ENCODE measurements at regions of chr9 and their contacts with region 1.

Region 1: GRCh38 chr9:15606643-15607472 is 54.0 kb downstream of the CCDC171 start:
- DNase-seq: peak in 1 of 2 donors; percentile 5
- ATAC-seq: peak in 2 of 8 donors; percentile 52 to 56
- H3K4me3 ChIP-seq: no peak overlapping the region
- H3K27ac ChIP-seq: no peak overlapping the region
- H3K4me1 ChIP-seq: no peaks in the 10 kb centered on the region
- H3K27me3 ChIP-seq: no peaks in the 10 kb centered on the region
- CTCF ChIP-seq: peak; percentile 66 to 87 (median 77)

Region 2: DNA sequence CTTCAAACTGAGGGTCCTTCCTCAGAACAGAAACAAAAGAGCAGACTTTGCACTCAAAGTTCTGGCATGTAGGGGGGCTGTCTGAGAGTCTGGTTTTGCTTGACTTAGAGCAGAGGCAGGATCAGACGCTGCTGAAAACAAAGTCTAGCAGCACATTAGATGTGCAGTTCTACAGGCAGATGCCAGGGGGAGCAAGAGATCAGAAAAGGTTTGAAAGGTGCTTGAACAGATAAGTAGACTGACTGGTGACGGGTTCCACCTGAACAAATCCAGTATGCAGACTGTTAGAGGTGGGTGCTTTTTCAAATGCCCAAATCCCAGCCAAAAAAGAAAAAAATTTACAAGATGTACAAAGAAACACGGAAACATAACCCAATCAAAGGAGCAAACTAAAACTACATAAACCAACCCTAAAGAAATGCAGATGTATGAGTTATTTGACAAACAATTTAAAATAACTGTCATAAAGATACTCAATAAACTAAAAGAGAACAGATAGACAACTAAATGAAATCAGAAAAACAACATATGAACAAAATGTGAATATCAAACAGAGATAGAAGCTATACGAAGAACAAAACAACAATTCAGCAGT is 501.9 kb before region 1 on chr9:
- intact Hi-C with region 1: loop called in 3 of 10 experiments (anchors 10 kb)
- DNase-seq: peak in 1 of 2 donors; percentile 20
- ATAC-seq: peak in 3 of 8 donors; percentile 31 to 52 (median 38)
- H3K4me3 ChIP-seq: no peak overlapping the region
- H3K27ac ChIP-seq: no peak overlapping the region
- H3K4me1 ChIP-seq: no peaks in the 10 kb centered on the region
- H3K27me3 ChIP-seq: peaks cover 0 to 4% (median 0%) of the 10 kb centered on the region in 7 donors
- CTCF ChIP-seq: peak; percentile 27 to 77 (median 69)

Region 3: DNA sequence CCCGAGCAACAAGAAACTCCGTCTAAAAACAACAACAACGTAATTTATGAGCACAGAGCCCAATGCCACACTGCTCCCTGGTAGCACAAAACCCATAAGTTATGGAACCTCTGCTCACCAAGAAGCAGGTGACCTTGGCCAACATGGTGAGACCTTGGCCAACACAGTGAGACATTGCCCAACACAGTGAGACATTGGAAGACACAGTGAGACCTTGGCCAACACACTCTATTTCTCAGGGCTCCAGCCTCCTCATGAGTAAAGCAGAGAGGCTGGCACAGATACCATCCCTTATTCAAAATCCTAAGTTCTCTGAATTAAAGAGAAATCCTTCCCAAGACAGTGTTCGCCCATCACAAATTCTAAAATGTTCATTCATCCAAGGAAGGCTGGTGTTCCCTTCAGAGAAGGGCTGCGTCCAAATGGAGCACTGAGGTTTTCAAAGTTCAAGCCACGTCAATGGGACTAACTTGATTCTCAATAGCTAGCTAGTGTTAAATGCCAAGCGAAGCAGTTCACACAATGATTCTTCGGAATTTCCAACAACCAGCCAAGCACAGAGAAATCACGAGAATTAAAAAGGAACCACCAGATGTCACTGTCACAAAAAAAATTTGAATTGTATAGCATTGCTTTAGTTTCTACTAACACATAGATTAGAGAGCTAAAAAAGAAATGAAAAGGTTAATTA is 329.3 kb before region 1 on chr9:
- intact Hi-C with region 1: loop called in 6 of 10 experiments (anchors 5 to 10 kb)
- DNase-seq: no peak
- ATAC-seq: peak in 3 of 8 donors; percentile 49 to 57 (median 51)
- H3K4me3 ChIP-seq: no peak overlapping the region
- H3K27ac ChIP-seq: no peak overlapping the region
- H3K4me1 ChIP-seq: no peaks in the 10 kb centered on the region
- H3K27me3 ChIP-seq: no peaks in the 10 kb centered on the region
- CTCF ChIP-seq: peak in 7 of 9 donors; percentile 30 to 56 (median 51)

Region 4: DNA sequence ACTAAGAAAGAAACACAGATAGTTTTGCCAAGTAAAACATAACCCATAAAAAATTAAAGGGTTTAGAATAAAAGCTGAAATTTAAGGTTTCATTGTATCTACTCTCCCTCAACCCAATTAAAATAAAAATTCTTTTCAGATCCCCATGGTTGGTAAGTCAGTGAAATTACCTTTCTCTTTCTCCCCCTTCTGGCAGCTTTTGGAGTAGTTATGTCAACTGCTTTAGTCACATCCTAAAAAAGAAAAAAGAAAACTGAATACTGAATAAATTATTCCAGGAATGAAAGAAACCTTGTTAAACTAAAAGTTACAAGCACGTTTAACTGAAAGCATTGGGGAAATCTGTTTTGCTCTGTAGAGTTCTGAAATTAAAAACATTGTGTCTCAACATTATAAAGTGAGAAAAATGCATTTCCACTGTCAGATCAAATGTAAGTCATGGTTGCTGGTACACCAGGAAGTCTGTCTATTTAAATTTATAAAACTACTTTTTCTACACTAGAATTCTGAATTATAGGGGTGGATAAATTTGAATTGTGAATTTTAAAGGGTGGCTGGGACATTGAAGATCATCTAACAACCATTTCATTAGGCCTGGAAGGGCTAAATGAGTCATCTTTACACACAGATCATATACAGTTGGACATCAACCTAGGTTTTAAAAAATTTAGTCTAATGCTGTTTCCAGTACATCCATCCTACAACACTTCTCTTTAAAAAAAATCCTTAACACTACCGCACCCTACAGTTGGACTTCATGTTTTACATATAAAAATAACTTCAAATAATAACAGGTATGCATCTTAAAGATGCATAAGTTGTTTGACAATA is 120.8 kb before region 1 on chr9:
- intact Hi-C with region 1: loop called in 1 of 10 experiments (anchors 10 kb)
- DNase-seq: no peak
- ATAC-seq: no peak
- H3K4me3 ChIP-seq: no peak overlapping the region
- H3K27ac ChIP-seq: no peak overlapping the region
- H3K4me1 ChIP-seq: no peaks in the 10 kb centered on the region
- H3K27me3 ChIP-seq: no peaks in the 10 kb centered on the region
- CTCF ChIP-seq: peak in 7 of 9 donors; percentile 27 to 51 (median 45)

Region 5: GRCh38 chr9:15552636-15553527 is 54.0 kb before region 1 on chr9 and contains the start of gene CCDC171:
- intact Hi-C with region 1: loop called in 2 of 10 experiments (anchors 5 kb)
- DNase-seq: peak; percentile 93 to 94
- ATAC-seq: peak; percentile 97 to 99 (median 98)
- H3K4me3 ChIP-seq: peak within 1 kb of the TSS; percentile 48 to 88 (median 76)
- H3K27ac ChIP-seq: peak within 1 kb of the TSS in 9 of 10 donors; percentile 76 to 91 (median 85)
- H3K4me1 ChIP-seq: peaks cover 0 to 14% (median 9%) of the 10 kb centered on the region in 9 donors
- H3K27me3 ChIP-seq: no peaks in the 10 kb centered on the region
- CTCF ChIP-seq: no peak
- total RNA-seq, gene CCDC171: 1.2 to 2.4 (median 1.8) TPM